ENCODE measurements at regions of chr16 and their contacts with region 1.

Region 1: GRCh38 chr16:19717771-19718602 is at the starts of genes IQCK and KNOP1:
- DNase-seq: peak; percentile 88 to 91 (median 90)
- H3K4me3 ChIP-seq: peak within 1 kb of the TSS; percentile 93 to 96
- H3K4me3 Mint-ChIP-seq: peak within 1 kb of the TSS; percentile 92 to 95 (median 94)
- H3K27ac ChIP-seq: peak within 1 kb of the TSS; percentile 67
- H3K27ac Mint-ChIP-seq: peak within 1 kb of the TSS; percentile 84 to 95 (median 88)
- H3K4me1 ChIP-seq: peaks cover 25% of the 10 kb centered on the region
- H3K4me1 Mint-ChIP-seq: peaks cover 17 to 46% (median 34%) of the 10 kb centered on the region in 4 donors
- H3K27me3 ChIP-seq: no peaks in the 10 kb centered on the region
- H3K27me3 Mint-ChIP-seq: no peaks in the 10 kb centered on the region
- total RNA-seq, gene IQCK: 1.7 to 3.1 TPM
- total RNA-seq, gene KNOP1: 15.3 to 16.6 TPM

Region 2: GRCh38 chr16:19067349-19068236 is 650.4 kb before region 1 on chr16 and contains the start of gene COQ7:
- CTCF ChIA-PET with region 1: no interaction called
- POLR2A ChIA-PET with region 1: no interaction called
- intact Hi-C with region 1: loop called (anchors 1 kb)
- DNase-seq: peak; percentile 99 to 100 (median 100)
- H3K4me3 ChIP-seq: peak within 1 kb of the TSS; percentile 79 to 99
- H3K4me3 Mint-ChIP-seq: peak within 1 kb of the TSS; percentile 92 to 96 (median 94)
- H3K27ac ChIP-seq: peak within 1 kb of the TSS; percentile 100
- H3K27ac Mint-ChIP-seq: peak within 1 kb of the TSS; percentile 93 to 99 (median 99)
- H3K4me1 ChIP-seq: peaks cover 9% of the 10 kb centered on the region
- H3K4me1 Mint-ChIP-seq: peaks cover 3 to 24% (median 14%) of the 10 kb centered on the region in 4 donors
- H3K27me3 ChIP-seq: no peaks in the 10 kb centered on the region
- H3K27me3 Mint-ChIP-seq: peaks cover 0 to 6% of the 10 kb centered on the region in 2 donors
- total RNA-seq, gene COQ7: 16.2 to 19.2 TPM

Region 3: DNA sequence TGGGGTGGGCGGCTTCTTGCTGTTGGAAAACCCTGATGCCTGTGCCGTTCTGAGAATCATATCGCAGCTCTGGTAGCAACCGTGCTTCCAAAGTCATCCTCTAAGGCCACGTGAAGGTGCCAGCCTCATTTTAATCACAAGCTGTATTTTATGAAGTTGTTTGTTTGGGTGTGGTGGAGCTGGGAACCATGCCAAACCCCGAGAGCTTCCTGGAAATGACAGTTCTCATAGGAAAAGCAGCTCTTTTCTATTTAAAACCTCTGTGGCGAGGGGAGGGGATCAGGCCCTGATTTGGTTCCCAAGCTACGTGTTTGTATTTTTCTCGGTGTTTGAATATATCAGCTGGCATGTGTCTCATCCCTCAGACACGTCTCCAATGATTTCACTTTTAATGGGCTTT is 21.7 kb before region 1 on chr16:
- CTCF ChIA-PET with region 1: interaction called, 12 read pairs
- POLR2A ChIA-PET with region 1: interaction called, 11 read pairs
- intact Hi-C with region 1: no loop called
- DNase-seq: peak; percentile 55 to 76 (median 67)
- H3K4me3 ChIP-seq: peak overlapping the region in 1 of 2 donors; percentile 20
- H3K4me3 Mint-ChIP-seq: peak overlapping the region; percentile 33 to 85 (median 74)
- H3K27ac ChIP-seq: peak overlapping the region; percentile 27
- H3K27ac Mint-ChIP-seq: peak overlapping the region; percentile 68 to 94 (median 92)
- H3K4me1 ChIP-seq: peaks cover 46% of the 10 kb centered on the region
- H3K4me1 Mint-ChIP-seq: peaks cover 42 to 71% (median 53%) of the 10 kb centered on the region in 4 donors
- H3K27me3 ChIP-seq: no peaks in the 10 kb centered on the region
- H3K27me3 Mint-ChIP-seq: no peaks in the 10 kb centered on the region

Region 4: GRCh38 chr16:19886073-19886941 is 168.3 kb after region 1 on chr16:
- CTCF ChIA-PET with region 1: no interaction called
- POLR2A ChIA-PET with region 1: interaction called, 3 read pairs
- intact Hi-C with region 1: loop called (anchors 1 kb)
- DNase-seq: peak; percentile 76 to 79 (median 76)
- H3K4me3 ChIP-seq: peak overlapping the region in 1 of 2 donors; percentile 9
- H3K4me3 Mint-ChIP-seq: peak overlapping the region; percentile 79 to 91 (median 86)
- H3K27ac ChIP-seq: no peak overlapping the region
- H3K27ac Mint-ChIP-seq: peak overlapping the region in 3 of 7 donors; percentile 60 to 89 (median 67)
- H3K4me1 ChIP-seq: peaks cover 24% of the 10 kb centered on the region
- H3K4me1 Mint-ChIP-seq: peaks cover 15 to 30% (median 23%) of the 10 kb centered on the region in 4 donors
- H3K27me3 ChIP-seq: peaks cover 12% of the 10 kb centered on the region
- H3K27me3 Mint-ChIP-seq: peaks cover 7 to 27% of the 10 kb centered on the region in 2 donors